Activated CD4-positive, alpha-beta T cell treated with anti-CD3 and anti-CD28 coated beads for 36 hours (primary cell): ENCODE measurements at regions of chr9 and their contacts with region 1.

Region 1: DNA sequence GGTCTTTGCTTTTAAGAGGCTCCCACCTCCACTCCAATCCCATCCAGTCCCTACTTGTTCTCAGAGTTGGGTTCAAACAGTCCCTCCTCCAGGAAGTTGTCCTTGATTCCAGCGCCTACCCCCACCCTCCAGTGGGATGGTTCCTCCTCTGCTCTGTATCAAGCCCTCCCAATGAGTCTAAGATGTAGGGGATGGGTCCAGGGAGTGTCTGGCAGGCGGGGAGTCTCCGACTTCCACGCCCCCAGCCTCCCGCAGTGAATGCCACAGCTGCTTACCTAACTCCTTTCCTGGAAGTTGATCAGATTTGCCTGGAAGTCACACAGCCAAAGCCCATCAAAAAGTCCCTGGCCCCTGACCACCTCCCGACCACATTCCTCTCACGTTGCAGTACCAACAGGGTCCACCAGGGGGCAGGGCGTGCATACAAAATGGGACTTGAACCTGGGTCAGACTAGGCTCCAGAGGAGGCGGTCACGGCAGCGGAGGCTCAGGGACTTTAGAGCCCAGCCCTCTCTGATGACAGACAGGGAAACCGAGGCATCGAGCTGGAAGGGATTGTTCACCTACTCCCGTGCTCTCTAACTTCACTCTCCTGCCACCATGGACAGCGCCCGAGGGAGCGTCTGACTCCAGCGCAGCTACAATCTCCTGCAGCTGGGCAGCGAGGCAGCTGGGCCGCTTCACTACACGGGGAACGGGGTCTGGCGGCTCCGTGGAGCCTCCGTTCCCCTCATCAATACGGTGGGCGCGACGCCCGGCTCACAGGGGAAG is 25.0 kb upstream of the TDRD7 start:
- DNase-seq: peak; percentile 86
- ATAC-seq: peak; percentile 55
- H3K4me3 Mint-ChIP-seq: no peak overlapping the region
- H3K27ac Mint-ChIP-seq: no peak overlapping the region
- H3K4me1 Mint-ChIP-seq: peaks cover 14% of the 10 kb centered on the region
- H3K27me3 Mint-ChIP-seq: peaks cover 16% of the 10 kb centered on the region

Region 2: GRCh38 chr9:96398582-96399324 is 988.2 kb before region 1 on chr9:
- CTCF ChIA-PET with region 1: no interaction called
- POLR2A ChIA-PET with region 1: no interaction called
- intact Hi-C with region 1: no loop called
- DNase-seq: no peak
- ATAC-seq: peak; percentile 19
- H3K4me3 Mint-ChIP-seq: no peak overlapping the region
- H3K27ac Mint-ChIP-seq: no peak overlapping the region
- H3K4me1 Mint-ChIP-seq: peaks cover 28% of the 10 kb centered on the region
- H3K27me3 Mint-ChIP-seq: no peaks in the 10 kb centered on the region

Region 3: DNA sequence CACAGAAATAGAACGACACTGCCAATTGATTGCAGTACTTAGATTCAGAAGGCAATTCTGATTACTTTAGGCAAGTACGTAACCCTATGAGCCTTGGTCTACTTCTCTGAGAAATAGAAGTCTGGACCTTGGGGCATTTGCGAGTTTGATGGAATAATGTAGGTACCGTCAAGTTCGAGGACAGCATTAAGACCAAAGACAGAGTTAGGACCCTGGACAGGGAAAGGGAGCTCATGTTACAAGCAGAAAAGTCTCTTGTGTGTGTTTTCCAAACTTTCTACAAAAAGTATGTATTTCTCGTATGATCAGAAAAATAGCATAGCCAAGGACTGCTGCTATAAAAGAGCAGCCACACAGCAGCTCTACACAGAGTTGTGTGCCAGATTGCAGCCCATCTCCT is 59.4 kb before region 1 on chr9:
- CTCF ChIA-PET with region 1: no interaction called
- POLR2A ChIA-PET with region 1: no interaction called
- intact Hi-C with region 1: no loop called
- DNase-seq: no peak
- ATAC-seq: no peak
- H3K4me3 Mint-ChIP-seq: no peak overlapping the region
- H3K27ac Mint-ChIP-seq: no peak overlapping the region
- H3K4me1 Mint-ChIP-seq: no peaks in the 10 kb centered on the region
- H3K27me3 Mint-ChIP-seq: no peaks in the 10 kb centered on the region

Region 4: GRCh38 chr9:97372580-97372979 is 14.3 kb before region 1 on chr9:
- CTCF ChIA-PET with region 1: interaction called, 18 read pairs
- POLR2A ChIA-PET with region 1: no interaction called
- intact Hi-C with region 1: no loop called
- DNase-seq: no peak
- ATAC-seq: no peak
- H3K4me3 Mint-ChIP-seq: no peak overlapping the region
- H3K27ac Mint-ChIP-seq: no peak overlapping the region
- H3K4me1 Mint-ChIP-seq: peaks cover 2% of the 10 kb centered on the region
- H3K27me3 Mint-ChIP-seq: no peaks in the 10 kb centered on the region

Region 5: DNA sequence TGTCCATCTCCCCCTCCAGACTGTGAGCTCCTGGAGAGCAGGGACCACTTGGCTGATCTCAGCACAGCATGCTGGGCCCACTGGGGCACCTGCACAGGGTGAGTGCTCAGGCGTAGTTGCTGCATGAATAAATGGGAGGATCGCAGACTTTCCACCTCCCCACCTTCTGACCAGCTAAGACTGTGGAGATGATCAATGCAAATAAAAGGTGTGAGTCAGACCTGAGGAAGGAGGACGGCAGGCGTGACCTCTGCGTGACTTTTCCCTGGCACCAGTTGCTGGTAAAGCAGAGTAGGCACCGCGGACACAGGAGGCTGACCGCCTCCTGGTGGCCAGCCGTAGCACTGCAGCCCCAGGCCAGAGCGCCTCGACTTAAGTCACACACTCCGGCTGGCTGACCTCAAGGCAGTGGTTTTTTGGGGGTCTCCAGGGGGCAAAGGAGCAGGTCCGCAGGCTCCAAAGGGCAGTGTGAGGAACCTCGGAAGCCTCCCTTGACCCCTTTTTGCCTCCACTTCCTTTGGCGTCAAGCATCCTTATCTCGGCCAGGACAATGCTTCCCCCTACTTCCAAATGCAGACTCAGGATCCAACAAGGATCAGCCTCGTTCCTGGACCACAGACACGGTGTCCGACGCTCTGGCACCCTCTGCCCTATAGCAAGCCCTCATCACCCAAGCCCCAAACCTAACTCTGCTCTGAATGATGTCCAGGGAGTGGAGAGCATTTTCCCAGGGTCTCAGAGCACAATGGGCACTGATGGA is 12.3 kb after region 1 on chr9:
- CTCF ChIA-PET with region 1: interaction called, 16 read pairs
- POLR2A ChIA-PET with region 1: no interaction called
- intact Hi-C with region 1: loop called (anchors 1 kb)
- DNase-seq: peak; percentile 84
- ATAC-seq: peak; percentile 58
- H3K4me3 Mint-ChIP-seq: no peak overlapping the region
- H3K27ac Mint-ChIP-seq: no peak overlapping the region
- H3K4me1 Mint-ChIP-seq: peaks cover 16% of the 10 kb centered on the region
- H3K27me3 Mint-ChIP-seq: peaks cover 6% of the 10 kb centered on the region